Adrenal gland (tissue), 19 donors: ENCODE measurements at regions of chr22 and their contacts with region 1.

Region 1: DNA sequence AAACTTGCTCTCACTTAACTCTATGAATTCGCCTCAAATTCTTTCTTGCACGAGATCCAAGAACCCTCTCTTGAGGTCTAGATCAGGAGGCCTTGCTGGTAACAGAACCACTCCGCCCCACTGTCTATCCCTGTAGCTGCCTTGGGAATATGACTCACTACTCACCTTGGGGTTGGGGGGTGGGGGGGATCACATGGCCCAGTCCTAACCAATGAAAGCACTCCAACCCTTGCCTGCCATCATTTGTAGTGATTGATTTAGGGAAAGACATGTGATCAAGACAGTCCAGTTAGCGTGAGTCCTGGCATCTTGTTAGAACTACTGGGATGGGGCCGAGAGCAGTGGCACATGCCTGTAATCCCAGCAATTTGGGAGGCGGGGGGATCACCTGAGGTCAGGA is 4.8 kb upstream of the MRTFA start:
- DNase-seq: peak in 3 of 7 donors; percentile 40 to 51 (median 40)
- H3K4me3 ChIP-seq: no peak overlapping the region
- H3K27ac ChIP-seq: no peak overlapping the region
- H3K4me1 ChIP-seq: peaks cover 7 to 9% of the 10 kb centered on the region in 2 donors
- H3K27me3 ChIP-seq: no peaks in the 10 kb centered on the region
- CTCF ChIP-seq: no peak
- POLR2A ChIP-seq: no peak

Region 2: GRCh38 chr22:40289991-40290459 is 351.2 kb before region 1 on chr22:
- intact Hi-C with region 1: no loop called
- DNase-seq: peak in 2 of 7 donors; percentile 10 to 75
- H3K4me3 ChIP-seq: no peak overlapping the region
- H3K27ac ChIP-seq: peak overlapping the region in 2 of 5 donors; percentile 14 to 31
- H3K4me1 ChIP-seq: no peaks in the 10 kb centered on the region
- H3K27me3 ChIP-seq: no peaks in the 10 kb centered on the region
- CTCF ChIP-seq: no peak
- POLR2A ChIP-seq: no peak

Region 3: GRCh38 chr22:40436505-40437451 is 204.5 kb before region 1 on chr22:
- intact Hi-C with region 1: loop called (anchors 5 to 10 kb)
- DNase-seq: peak in 6 of 7 donors; percentile 60 to 77 (median 64)
- H3K4me3 ChIP-seq: peak overlapping the region in 1 of 4 donors; percentile 45
- H3K27ac ChIP-seq: peak overlapping the region in 3 of 5 donors; percentile 56 to 68 (median 68)
- H3K4me1 ChIP-seq: peaks cover 16 to 37% of the 10 kb centered on the region in 2 donors
- H3K27me3 ChIP-seq: no peaks in the 10 kb centered on the region
- CTCF ChIP-seq: peak; percentile 34 to 87 (median 73)
- POLR2A ChIP-seq: no peak

Region 4: DNA sequence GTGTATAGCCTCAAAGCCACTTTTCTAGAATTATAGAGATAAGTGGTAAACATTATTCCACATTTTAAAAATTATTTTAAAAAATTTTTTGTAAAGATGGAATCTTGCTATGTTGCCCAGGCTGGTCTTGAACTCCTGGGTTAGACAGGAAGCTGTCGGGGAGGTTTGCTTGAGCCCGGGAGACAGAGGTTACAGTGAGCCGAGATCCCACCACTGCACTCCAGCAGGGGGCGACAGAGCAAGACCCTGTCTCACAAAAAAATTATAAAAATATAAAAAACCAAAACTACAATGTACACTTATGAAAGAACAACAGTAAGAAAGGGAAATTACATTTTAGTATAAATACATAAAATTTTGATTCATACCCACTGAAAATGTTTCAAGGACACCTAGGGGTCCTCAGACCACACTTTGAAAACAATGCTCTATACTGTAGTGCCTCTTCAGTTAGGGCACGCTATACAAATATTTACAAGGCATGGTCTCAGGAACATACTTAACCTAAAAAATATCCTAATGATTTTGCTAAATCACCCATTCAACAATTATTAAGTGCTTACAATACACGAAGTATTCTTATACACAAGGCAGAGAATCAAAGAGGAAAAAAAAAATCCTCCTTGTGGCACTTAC is 115.9 kb before region 1 on chr22:
- intact Hi-C with region 1: loop called (anchors 5 to 10 kb)
- DNase-seq: peak; percentile 54 to 81 (median 60)
- H3K4me3 ChIP-seq: no peak overlapping the region
- H3K27ac ChIP-seq: no peak overlapping the region
- H3K4me1 ChIP-seq: peaks cover 0 to 2% of the 10 kb centered on the region in 2 donors
- H3K27me3 ChIP-seq: no peaks in the 10 kb centered on the region
- CTCF ChIP-seq: peak; percentile 45 to 72 (median 66)
- POLR2A ChIP-seq: no peak

Region 5: DNA sequence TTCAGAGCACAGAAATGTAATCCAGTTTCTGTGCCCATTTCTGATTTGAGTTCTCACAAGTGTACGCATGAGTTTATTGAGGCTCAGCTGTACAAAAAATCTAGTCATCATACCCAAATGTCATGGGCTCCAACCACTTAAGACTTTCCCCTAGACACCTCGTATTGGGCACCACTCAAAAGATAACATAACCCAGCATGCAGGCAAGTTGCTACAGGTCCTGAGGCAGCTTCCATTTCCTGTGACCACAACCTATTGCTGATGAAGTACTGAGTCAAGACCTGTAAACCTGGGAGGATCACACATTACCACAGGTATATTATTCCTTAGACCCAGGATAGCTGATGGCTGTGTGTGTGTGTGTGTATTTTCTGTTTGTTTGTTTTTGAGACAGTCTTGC is 100.0 kb before region 1 on chr22:
- intact Hi-C with region 1: no loop called
- DNase-seq: no peak
- H3K4me3 ChIP-seq: no peak overlapping the region
- H3K27ac ChIP-seq: no peak overlapping the region
- H3K4me1 ChIP-seq: peaks cover 0 to 15% of the 10 kb centered on the region in 2 donors
- H3K27me3 ChIP-seq: no peaks in the 10 kb centered on the region
- CTCF ChIP-seq: no peak
- POLR2A ChIP-seq: no peak